Left lung (tissue), 14 donors: ENCODE measurements at regions of chr4 and their contacts with region 1.

Region 1: GRCh38 chr4:112853662-112854256 is 195.7 kb upstream of the ANK2 start:
- DNase-seq: peak in 1 of 4 donors; percentile 1
- ATAC-seq: no peak
- H3K4me3 ChIP-seq: no peak overlapping the region
- H3K27ac ChIP-seq: no peak overlapping the region
- H3K4me1 ChIP-seq: no peaks in the 10 kb centered on the region
- H3K27me3 ChIP-seq: no peaks in the 10 kb centered on the region
- CTCF ChIP-seq: peak in 1 of 2 donors; percentile 23

Region 2: GRCh38 chr4:112589206-112589605 is 264.6 kb before region 1 on chr4:
- intact Hi-C with region 1: no loop called
- DNase-seq: no peak
- ATAC-seq: no peak
- H3K4me3 ChIP-seq: no peak overlapping the region
- H3K27ac ChIP-seq: no peak overlapping the region
- H3K4me1 ChIP-seq: no peaks in the 10 kb centered on the region
- H3K27me3 ChIP-seq: no peaks in the 10 kb centered on the region
- CTCF ChIP-seq: no peak

Region 3: GRCh38 chr4:112938461-112939058 is 84.8 kb after region 1 on chr4:
- intact Hi-C with region 1: loop called in 1 of 2 experiments (anchors 10 kb)
- DNase-seq: peak in 2 of 4 donors; percentile 30 to 41
- ATAC-seq: peak; percentile 52
- H3K4me3 ChIP-seq: no peak overlapping the region
- H3K27ac ChIP-seq: no peak overlapping the region
- H3K4me1 ChIP-seq: no peaks in the 10 kb centered on the region
- H3K27me3 ChIP-seq: no peaks in the 10 kb centered on the region
- CTCF ChIP-seq: peak; percentile 40 to 51

Region 4: GRCh38 chr4:113547487-113548042 is 693.8 kb after region 1 on chr4:
- intact Hi-C with region 1: no loop called
- DNase-seq: peak; percentile 63 to 89 (median 84)
- ATAC-seq: peak; percentile 100
- H3K4me3 ChIP-seq: no peak overlapping the region
- H3K27ac ChIP-seq: peak overlapping the region; percentile 45 to 69
- H3K4me1 ChIP-seq: peaks cover 0 to 14% of the 10 kb centered on the region in 2 donors
- H3K27me3 ChIP-seq: no peaks in the 10 kb centered on the region
- CTCF ChIP-seq: peak; percentile 92 to 97